ENCODE measurements at regions of chr3 and their contacts with region 1.

Region 1: DNA sequence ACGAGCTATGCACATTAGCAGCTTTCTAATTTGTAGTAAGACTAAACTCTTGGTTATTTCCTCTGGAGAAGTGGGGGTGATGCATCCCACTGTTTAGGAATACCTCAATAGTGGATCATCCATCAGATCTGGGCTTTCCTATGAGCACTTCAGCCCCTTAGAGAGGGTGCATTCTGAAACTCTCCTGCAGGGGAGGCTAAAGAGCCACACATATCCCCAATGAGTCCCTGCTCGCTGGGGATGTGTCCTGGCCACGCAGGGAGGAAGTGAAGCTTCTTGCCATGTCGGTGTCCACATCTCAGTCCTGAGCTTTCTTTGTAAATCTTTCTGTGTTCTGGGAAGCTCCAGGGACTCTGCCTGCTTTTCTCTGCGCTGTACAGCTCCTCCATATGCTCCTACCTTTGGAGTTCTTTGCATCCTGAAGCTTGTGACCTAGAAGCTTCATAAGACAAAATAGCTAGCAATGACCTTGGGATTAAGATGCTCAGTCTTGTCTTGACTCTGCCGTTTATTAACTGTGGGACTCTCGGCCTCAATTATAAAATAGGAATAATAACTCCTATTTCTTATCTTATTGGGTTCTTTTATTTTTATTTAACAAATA is 28.3 kb upstream of the MASP1 start:
- H3K4me3 ChIP-seq: no peak overlapping the region
- H3K27ac ChIP-seq: no peak overlapping the region
- H3K4me1 ChIP-seq: no peaks in the 10 kb centered on the region
- CTCF ChIP-seq: peak; percentile 72

Region 2: GRCh38 chr3:187264021-187264420 is 55.8 kb before region 1 on chr3:
- CTCF ChIA-PET with region 1: interaction called, 19 read pairs
- POLR2A ChIA-PET with region 1: no interaction called
- H3K4me3 ChIP-seq: no peak overlapping the region
- H3K27ac ChIP-seq: no peak overlapping the region
- H3K4me1 ChIP-seq: peaks cover 3% of the 10 kb centered on the region
- CTCF ChIP-seq: no peak

Region 3: DNA sequence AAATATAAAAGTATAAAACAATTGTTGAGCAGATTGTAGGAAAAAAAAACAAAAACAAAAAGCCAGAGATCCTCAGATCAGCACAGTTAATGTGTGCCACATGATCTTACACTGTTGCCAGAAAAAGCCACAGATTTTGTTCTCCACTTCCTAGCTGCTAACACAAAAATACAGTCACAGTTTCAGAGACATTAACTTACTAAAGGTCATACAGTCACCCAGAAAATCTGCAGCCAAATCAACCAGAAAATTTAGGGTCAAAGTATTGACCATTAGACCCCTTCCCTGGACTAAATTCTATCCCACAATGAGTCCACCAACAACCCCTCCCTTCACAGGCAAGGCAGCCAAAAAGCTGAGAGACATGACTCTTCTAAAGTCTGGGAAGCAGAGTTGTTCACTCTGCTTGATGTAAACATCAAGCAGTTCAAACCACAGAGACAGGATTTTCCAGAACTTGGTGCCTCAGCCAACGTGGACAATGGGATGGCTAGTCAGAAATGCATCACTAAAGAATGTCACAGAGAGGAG is 291.2 kb after region 1 on chr3:
- CTCF ChIA-PET with region 1: interaction called, 33 read pairs
- POLR2A ChIA-PET with region 1: no interaction called
- H3K4me3 ChIP-seq: no peak overlapping the region
- H3K27ac ChIP-seq: no peak overlapping the region
- H3K4me1 ChIP-seq: no peaks in the 10 kb centered on the region
- CTCF ChIP-seq: no peak

Region 4: DNA sequence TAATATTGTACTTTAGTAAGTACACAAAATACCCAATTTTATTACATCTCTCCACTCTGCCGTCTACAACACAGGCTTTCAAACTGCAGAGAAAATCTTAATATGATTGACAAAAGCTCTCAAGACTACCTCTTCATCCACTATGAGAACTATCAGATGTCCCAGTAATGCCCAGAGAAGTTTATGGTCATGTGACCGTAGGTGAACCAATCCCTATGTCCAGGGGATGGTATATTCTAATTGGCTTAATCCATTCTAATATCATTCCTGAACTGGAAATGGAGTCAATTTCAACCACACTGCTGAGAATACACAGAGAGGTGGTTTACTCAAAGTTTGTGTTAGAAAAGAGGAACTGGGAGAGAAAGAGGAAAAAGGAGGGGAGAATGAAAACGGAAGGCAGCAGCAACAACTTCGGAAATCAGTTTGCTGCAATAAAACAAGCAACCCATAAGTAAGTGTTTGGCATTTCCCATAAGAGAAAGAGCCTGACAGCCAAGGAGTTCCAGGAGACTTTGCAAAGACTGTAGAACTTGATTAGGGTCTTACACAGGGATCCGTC is 343.1 kb after region 1 on chr3:
- CTCF ChIA-PET with region 1: interaction called, 27 read pairs
- POLR2A ChIA-PET with region 1: no interaction called
- H3K4me3 ChIP-seq: no peak overlapping the region
- H3K27ac ChIP-seq: no peak overlapping the region
- H3K4me1 ChIP-seq: no peaks in the 10 kb centered on the region
- CTCF ChIP-seq: no peak

Region 5: GRCh38 chr3:187679638-187680396 is 360.0 kb after region 1 on chr3:
- CTCF ChIA-PET with region 1: interaction called, 407 read pairs
- POLR2A ChIA-PET with region 1: interaction called, 3 read pairs
- H3K4me3 ChIP-seq: no peak overlapping the region
- H3K27ac ChIP-seq: no peak overlapping the region
- H3K4me1 ChIP-seq: no peaks in the 10 kb centered on the region
- CTCF ChIP-seq: peak; percentile 81

Region 6: DNA sequence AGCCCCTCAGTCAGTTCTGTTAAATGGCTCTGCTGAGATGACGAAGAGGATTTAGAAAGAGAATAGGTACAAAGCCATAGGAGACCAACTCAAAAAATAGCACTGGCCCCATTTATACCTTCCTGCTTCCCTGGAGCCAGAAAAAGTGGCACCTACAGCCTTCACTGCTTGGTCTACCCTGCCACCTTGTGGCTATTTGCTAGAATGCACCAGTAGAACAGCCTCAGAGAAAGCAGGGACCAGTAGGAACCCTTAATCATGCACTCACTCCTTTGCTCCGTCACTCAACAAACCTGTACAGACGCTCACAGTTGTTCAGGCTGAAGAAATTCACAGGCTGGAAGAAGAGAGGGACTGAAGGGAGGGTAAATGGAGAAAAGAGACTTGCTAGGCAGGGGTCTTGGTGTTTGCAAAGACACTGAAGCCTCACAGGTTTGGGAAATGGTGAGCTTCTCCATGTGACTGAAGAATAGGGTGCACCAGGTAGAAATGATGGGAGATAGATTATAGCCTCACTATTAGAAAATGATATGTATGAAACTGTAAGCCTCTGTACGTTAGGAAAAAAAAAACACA is 394.7 kb after region 1 on chr3:
- CTCF ChIA-PET with region 1: interaction called, 104 read pairs
- POLR2A ChIA-PET with region 1: no interaction called
- H3K4me3 ChIP-seq: no peak overlapping the region
- H3K27ac ChIP-seq: no peak overlapping the region
- H3K4me1 ChIP-seq: no peaks in the 10 kb centered on the region
- CTCF ChIP-seq: peak; percentile 67

Measured in HEK293 (cell line).